A549 (cell line): ENCODE measurements at regions of chr9 and their contacts with region 1.

Region 1: DNA sequence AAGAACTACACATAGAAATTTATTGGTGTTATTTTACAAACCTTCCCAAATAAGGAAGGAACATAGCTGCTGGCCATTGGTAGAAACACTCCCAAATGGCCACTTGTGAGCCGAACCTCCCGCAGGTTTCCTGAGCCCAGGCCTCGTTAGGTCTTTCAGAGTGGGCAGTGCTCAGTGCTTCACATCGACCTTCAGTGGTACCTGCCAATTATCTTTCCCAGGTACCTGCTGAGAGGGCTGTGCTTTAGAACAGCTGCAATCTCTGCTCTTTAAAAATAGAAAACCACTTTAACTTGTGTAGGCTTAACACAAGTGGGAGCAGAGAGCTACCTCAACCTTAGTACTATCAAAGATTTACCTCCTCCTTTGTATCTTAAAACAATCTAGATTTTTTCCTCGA is 334.1 kb downstream of the RFX3 start:
- DNase-seq: no peak
- ATAC-seq: no peak
- H3K4me3 ChIP-seq: no peak overlapping the region
- H3K27ac ChIP-seq: no peak overlapping the region
- H3K4me1 ChIP-seq: no peaks in the 10 kb centered on the region
- CTCF ChIP-seq: no peak
- EP300 ChIP-seq: no peak
- POLR2A ChIP-seq: no peak
- RAD21 ChIP-seq: no peak

Region 2: DNA sequence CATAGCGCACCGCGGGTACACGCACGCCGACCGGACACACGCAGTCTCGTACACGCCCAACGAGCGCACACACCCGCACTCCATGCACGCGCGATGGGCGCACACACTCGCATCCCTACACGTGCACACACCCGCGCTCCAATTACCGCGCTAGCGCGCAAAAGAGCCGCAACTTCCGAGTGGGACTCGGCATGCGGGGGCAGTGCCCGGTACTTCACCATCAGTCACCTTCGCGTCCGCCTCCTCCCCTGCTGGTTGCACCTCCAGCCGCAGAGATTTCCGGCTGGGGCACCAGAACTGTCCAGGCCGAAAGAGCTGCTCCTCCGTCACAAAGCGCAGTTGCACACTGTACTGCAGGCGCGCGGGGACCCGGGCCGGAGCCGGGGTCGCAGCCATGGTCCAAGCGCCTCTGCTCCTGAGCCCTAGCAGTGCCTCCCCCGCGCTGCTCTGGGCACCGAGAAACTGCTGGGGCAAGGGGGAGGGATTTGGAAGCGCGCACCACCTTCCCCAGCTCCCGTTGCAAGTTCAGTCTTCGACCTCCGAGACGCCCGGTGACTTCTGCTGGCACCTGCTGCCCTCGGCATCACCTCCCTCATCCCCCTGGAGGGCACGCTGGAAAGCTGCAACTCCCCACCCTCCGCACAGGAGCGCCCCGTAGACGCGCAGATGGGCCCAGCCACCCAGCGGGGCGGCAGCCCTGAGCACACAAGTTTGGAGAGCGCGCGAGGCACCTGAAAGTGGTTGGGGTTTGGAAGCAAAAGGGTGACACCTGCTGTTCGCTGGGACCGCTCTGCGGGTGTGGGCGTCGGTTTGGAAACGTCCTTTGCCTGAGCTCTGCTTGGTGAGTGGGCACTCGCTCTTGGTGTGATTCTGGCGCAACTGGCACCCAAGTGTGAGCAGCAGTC is 10.4 kb before region 1 on chr9:
- CTCF ChIA-PET with region 1: interaction called, 25 read pairs
- POLR2A ChIA-PET with region 1: no interaction called
- DNase-seq: peak; percentile 8 to 48
- ATAC-seq: peak; percentile 75 to 89
- H3K4me3 ChIP-seq: peak overlapping the region; percentile 31; the same call in 2 of the 3 replicates
- H3K27ac ChIP-seq: no peak overlapping the region
- H3K4me1 ChIP-seq: no peaks in the 10 kb centered on the region
- CTCF ChIP-seq: peak; percentile 46
- EP300 ChIP-seq: no peak
- POLR2A ChIP-seq: no peak
- RAD21 ChIP-seq: peak; percentile 59 to 60

Region 3: DNA sequence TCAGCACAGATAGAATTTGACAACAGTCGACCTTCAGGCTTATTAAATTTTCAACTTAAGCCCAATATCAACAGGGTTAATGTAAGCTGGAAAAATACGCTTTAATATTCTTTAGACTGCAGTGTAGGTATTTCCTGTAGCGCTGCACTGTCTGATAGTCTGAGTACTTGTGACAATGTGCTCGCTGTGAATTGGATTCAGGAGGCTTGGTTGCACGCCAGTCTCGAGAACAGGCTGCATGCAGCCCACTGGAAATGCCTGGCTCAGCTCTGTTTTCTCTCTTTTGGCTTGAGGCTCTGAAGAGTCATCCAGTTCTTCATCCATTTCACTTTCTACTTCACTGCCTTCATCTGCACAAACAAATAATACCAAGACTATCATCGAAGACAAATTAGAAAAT is 33.2 kb after region 1 on chr9:
- CTCF ChIA-PET with region 1: no interaction called
- POLR2A ChIA-PET with region 1: no interaction called
- DNase-seq: no peak
- ATAC-seq: no peak
- H3K4me3 ChIP-seq: no peak overlapping the region
- H3K27ac ChIP-seq: no peak overlapping the region
- H3K4me1 ChIP-seq: no peaks in the 10 kb centered on the region
- CTCF ChIP-seq: no peak
- EP300 ChIP-seq: no peak
- POLR2A ChIP-seq: no peak
- RAD21 ChIP-seq: no peak

Region 4: GRCh38 chr9:3235497-3235896 is 43.8 kb after region 1 on chr9:
- CTCF ChIA-PET with region 1: no interaction called
- POLR2A ChIA-PET with region 1: no interaction called
- DNase-seq: no peak
- ATAC-seq: no peak
- H3K4me3 ChIP-seq: no peak overlapping the region
- H3K27ac ChIP-seq: no peak overlapping the region
- H3K4me1 ChIP-seq: no peaks in the 10 kb centered on the region
- CTCF ChIP-seq: no peak
- EP300 ChIP-seq: no peak
- POLR2A ChIP-seq: no peak
- RAD21 ChIP-seq: no peak